K562 (cell line): ENCODE measurements at regions of chr13 and their contacts with region 1.

Region 1: GRCh38 chr13:39129213-39129612 is 91.0 kb downstream of the NHLRC3 start:
- DNase-seq: no peak
- ATAC-seq: no peak
- H3K4me3 ChIP-seq: no peak overlapping the region
- H3K27ac ChIP-seq: no peak overlapping the region
- H3K4me1 ChIP-seq: no peaks in the 10 kb centered on the region
- H3K27me3 ChIP-seq: no peaks in the 10 kb centered on the region
- CTCF ChIP-seq: no peak
- EP300 ChIP-seq: no peak
- POLR2A ChIP-seq: no peak
- RAD21 ChIP-seq: no peak

Region 2: DNA sequence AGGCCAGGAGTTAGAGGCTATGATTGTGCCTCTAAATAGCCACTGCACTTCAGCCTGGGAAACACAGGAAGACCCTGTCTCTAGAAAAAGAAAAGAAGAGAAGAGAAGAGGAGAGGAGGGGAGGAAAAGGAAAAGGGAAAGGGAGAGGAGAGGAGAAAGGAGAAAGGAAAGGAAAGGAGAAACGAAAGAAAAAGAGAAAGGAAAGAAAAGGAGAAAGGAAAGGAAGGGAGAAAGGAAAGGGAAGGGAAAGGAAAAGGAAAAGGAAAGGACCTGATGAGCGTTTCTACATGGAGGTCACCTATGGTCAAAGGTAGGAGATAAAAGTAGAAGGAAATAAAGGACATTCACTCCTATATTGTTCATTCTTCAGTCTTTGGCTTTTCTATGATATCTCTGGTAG is 1150.5 kb before region 1 on chr13:
- CTCF ChIA-PET with region 1: no interaction called
- POLR2A ChIA-PET with region 1: no interaction called
- in situ Hi-C with region 1: no loop called
- intact Hi-C with region 1: no loop called
- DNase-seq: no peak
- ATAC-seq: no peak
- H3K4me3 ChIP-seq: no peak overlapping the region
- H3K27ac ChIP-seq: no peak overlapping the region
- H3K4me1 ChIP-seq: no peaks in the 10 kb centered on the region
- H3K27me3 ChIP-seq: no peaks in the 10 kb centered on the region
- CTCF ChIP-seq: no peak
- EP300 ChIP-seq: no peak
- POLR2A ChIP-seq: no peak
- RAD21 ChIP-seq: no peak

Region 3: GRCh38 chr13:39091586-39091985 is 37.6 kb before region 1 on chr13:
- CTCF ChIA-PET with region 1: no interaction called
- POLR2A ChIA-PET with region 1: no interaction called
- in situ Hi-C with region 1: loop called (anchors 5 kb)
- intact Hi-C with region 1: no loop called
- DNase-seq: no peak
- ATAC-seq: no peak
- H3K4me3 ChIP-seq: no peak overlapping the region
- H3K27ac ChIP-seq: no peak overlapping the region
- H3K4me1 ChIP-seq: no peaks in the 10 kb centered on the region
- H3K27me3 ChIP-seq: no peaks in the 10 kb centered on the region
- CTCF ChIP-seq: no peak
- EP300 ChIP-seq: no peak
- POLR2A ChIP-seq: no peak
- RAD21 ChIP-seq: no peak

Region 4: DNA sequence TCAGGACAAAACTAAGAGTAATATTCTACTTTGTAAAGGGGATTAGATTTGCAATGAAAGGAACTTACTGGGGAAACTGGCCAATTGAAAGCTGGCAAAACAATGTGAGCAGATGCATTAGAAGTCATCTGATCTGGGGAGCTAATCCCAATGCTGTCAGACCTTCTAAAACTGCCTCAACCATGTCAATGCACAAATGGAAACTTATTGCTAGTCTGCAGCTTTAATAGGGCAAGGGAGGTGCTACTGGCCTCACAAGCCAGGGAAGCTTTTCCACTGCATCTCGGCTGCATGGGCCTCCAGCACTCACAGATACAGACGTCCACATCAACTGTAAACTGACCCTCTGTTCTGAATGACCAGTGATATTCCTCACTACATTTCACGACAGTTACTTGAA is 319.6 kb after region 1 on chr13:
- CTCF ChIA-PET with region 1: no interaction called
- POLR2A ChIA-PET with region 1: no interaction called
- in situ Hi-C with region 1: no loop called
- intact Hi-C with region 1: no loop called
- DNase-seq: no peak
- ATAC-seq: no peak
- H3K4me3 ChIP-seq: no peak overlapping the region
- H3K27ac ChIP-seq: no peak overlapping the region
- H3K4me1 ChIP-seq: no peaks in the 10 kb centered on the region
- H3K27me3 ChIP-seq: no peaks in the 10 kb centered on the region
- CTCF ChIP-seq: no peak
- EP300 ChIP-seq: no peak
- POLR2A ChIP-seq: no peak
- RAD21 ChIP-seq: no peak